Colonic mucosa (tissue), 4 donors: ENCODE measurements at regions of chr1 and their contacts with region 1.

Region 1: DNA sequence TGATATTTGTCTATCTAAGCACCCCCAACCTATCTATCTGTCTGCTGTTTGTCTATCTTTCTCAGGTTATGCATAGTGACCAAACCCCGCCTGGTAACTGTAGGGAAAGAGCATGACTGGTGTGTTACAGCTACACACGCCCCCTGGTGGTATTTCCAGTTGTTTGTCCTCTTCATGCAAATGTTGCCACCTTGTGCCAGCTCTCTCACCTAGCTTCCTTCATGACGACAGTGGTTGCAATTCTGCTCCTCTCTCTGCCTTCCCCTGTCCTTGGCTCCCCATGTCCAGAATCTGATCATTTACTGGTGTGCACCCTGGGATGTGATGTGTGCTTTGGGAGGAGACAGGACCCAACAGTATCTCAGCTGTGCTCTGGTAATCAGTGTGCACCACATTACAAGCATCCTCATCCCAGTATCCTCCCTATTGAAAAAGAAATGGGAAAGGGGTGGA is 8.1 kb upstream of the INKA2 start:
- DNase-seq: peak; percentile 89
- H3K4me3 ChIP-seq: no peak overlapping the region
- H3K27ac ChIP-seq: no peak overlapping the region
- H3K4me1 ChIP-seq: no peaks in the 10 kb centered on the region
- H3K27me3 ChIP-seq: no peaks in the 10 kb centered on the region
- CTCF ChIP-seq: peak; percentile 64

Region 2: GRCh38 chr1:111481387-111482221 is 265.7 kb before region 1 on chr1:
- intact Hi-C with region 1: loop called (anchors 2 kb)
- DNase-seq: peak; percentile 80
- H3K4me3 ChIP-seq: no peak overlapping the region
- H3K27ac ChIP-seq: no peak overlapping the region
- H3K4me1 ChIP-seq: no peaks in the 10 kb centered on the region
- H3K27me3 ChIP-seq: no peaks in the 10 kb centered on the region
- CTCF ChIP-seq: peak; percentile 61

Region 3: DNA sequence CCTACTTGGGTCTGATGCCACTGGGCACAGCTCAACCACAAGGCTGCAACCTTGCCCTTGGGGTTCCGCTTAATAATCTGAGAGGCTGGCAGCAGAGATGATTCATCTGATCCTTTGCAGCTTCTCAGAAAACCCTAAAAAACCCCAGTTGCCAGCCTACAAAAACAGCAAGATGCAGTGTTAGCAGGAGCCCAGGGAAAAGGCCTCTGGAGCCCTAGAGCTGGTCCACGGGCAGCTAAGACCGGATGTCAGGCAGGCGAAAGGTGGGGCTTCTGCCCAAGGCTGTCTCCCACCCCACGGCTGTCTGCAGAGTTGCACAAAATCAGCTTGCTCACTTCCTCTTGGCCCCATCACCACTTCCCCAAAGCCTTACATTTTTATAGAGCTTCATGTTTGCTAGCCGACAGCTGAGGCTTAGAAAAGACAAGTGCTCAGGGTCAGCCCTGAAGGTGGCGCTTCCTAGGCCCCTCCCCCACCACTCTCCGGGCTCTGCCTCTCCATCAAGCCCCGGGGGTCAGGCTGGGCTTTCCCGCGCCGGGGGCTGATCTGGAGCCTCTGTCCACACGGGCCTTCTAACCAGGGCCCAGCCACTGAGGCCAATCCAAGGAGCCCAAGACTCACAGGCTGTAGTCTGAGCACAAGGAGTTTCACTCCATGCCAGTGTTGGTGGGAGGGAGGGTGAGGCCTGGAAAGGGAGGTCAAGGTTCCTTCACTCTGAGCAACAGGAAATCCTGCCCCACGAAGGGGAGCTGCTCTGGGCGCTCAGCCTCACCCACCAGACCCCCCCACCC is 239.7 kb before region 1 on chr1:
- intact Hi-C with region 1: loop called (anchors 5 kb)
- DNase-seq: peak; percentile 89
- H3K4me3 ChIP-seq: peak overlapping the region; percentile 19
- H3K27ac ChIP-seq: peak overlapping the region; percentile 95
- H3K4me1 ChIP-seq: peaks cover 19% of the 10 kb centered on the region
- H3K27me3 ChIP-seq: no peaks in the 10 kb centered on the region
- CTCF ChIP-seq: no peak

Region 4: DNA sequence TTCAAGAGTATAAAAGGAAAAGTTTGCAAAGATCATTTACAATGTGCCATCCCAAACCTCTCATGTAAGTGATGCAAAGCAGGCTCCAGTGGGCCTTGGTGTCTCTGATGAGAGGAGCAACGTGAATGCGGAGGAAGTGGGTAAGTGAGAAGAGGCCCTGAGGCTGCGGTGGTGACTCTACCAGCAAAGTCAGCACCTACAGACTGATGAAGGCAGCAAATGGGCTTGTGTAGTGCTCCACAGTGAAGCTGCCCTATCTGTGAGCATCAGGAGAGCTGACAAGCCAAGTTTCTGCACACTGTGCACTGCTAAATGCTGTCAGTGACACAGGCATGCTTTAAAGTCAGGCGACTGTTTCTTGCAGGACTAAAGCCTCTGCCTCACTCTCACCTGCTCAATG is 143.3 kb before region 1 on chr1:
- intact Hi-C with region 1: no loop called
- DNase-seq: no peak
- H3K4me3 ChIP-seq: no peak overlapping the region
- H3K27ac ChIP-seq: no peak overlapping the region
- H3K4me1 ChIP-seq: no peaks in the 10 kb centered on the region
- H3K27me3 ChIP-seq: no peaks in the 10 kb centered on the region
- CTCF ChIP-seq: no peak

Region 5: DNA sequence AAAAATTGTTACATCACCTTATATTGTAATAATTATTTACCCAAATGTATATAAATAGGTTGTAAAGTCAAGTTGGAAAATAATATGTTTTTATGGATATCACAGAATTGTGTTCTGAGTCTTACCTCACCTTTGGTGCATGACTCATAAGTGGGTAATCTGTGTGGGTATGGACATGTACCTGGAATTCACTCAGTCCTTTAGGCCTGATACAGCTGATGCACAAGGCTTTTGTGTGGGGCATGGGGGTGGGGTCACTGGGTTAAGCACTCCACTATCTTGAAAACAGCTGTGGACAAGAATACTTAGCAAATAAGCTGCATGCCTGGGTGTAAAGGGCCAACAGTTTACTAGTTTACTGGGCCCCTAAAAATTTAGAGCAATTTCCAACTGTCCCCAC is 42.5 kb before region 1 on chr1:
- intact Hi-C with region 1: no loop called
- DNase-seq: no peak
- H3K4me3 ChIP-seq: no peak overlapping the region
- H3K27ac ChIP-seq: no peak overlapping the region
- H3K4me1 ChIP-seq: no peaks in the 10 kb centered on the region
- H3K27me3 ChIP-seq: no peaks in the 10 kb centered on the region
- CTCF ChIP-seq: no peak

Region 6: GRCh38 chr1:111961016-111961415 is 213.7 kb after region 1 on chr1:
- intact Hi-C with region 1: no loop called
- DNase-seq: no peak
- H3K4me3 ChIP-seq: no peak overlapping the region
- H3K27ac ChIP-seq: no peak overlapping the region
- H3K4me1 ChIP-seq: no peaks in the 10 kb centered on the region
- H3K27me3 ChIP-seq: no peaks in the 10 kb centered on the region
- CTCF ChIP-seq: no peak